GM10248 (cell line): ENCODE measurements at regions of chr13 and their contacts with region 1.

Region 1: GRCh38 chr13:21913010-21913409 is 242.1 kb downstream of the FGF9 start:
- DNase-seq: peak; percentile 34
- CTCF ChIP-seq: no peak

Region 2: DNA sequence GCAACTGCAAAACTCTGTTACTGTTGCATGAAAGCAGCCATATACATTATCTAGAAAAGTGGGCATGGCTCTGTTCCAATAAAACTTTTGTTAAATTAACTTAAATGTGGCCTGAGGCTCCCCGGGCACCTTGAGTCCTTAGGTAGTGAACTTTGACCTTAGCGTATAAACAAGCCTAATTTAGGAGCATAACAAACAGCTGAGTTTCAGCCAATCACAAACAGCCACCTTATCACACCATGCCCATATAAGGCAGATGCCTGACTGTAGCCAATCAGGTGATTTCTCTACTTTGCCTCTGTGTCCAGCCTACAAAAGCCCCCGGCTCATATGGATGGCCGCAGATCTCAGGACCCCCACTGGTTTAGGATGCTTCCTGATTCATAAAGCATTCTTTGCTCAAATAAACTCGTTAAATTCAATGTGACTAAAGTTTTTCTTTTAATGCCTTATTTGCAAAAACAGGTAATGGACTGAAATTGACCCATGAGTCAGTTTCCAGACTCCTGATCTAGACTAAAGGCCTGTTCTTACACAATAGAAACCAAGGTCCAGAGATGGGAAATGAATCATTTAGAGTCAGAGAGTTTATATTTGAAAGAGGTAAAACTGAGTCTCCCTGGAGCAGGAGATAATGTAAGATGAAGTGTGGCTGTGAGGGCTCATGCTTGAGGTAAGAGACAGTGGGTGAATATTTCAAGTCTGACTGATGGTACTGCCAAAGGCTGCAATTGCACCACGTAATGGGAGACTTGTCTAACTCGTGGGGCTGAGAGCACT is 112.0 kb before region 1 on chr13:
- CTCF ChIA-PET with region 1: no interaction called
- POLR2A ChIA-PET with region 1: no interaction called
- DNase-seq: no peak
- CTCF ChIP-seq: no peak

Region 3: GRCh38 chr13:22278336-22278929 is 365.4 kb after region 1 on chr13:
- CTCF ChIA-PET with region 1: interaction called, 14 read pairs
- POLR2A ChIA-PET with region 1: no interaction called
- DNase-seq: peak; percentile 42
- CTCF ChIP-seq: peak; percentile 61